AG04450 (cell line): ENCODE measurements at regions of chr2 and their contacts with region 1.

Region 1: DNA sequence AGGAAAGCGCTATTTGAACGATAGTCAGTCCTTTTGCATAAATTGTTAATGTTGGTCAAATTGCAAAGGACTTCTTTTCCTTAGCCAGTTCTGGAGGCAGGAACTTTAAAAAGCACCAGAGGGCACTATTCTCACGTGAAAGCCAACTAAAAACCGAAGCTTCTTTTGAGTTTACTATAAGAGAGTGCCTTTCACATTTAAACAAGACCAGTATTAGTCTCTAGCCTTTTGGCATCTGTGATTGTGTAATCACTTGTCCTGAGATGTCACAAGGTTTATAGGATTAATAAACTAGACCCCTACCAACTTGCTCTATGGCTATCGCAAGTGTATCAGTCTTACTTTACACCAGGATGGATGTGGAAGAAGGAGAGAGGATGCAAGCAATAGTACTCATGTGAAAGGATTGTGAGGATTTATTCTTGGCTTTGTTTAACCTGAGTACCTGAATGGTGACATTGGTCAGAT is 14.4 kb upstream of the STAT4 start:
- DNase-seq: no peak
- H3K4me3 ChIP-seq: no peak overlapping the region
- H3K27ac ChIP-seq: no peak overlapping the region
- H3K27me3 ChIP-seq: no peaks in the 10 kb centered on the region
- CTCF ChIP-seq: peak; percentile 81

Region 2: GRCh38 chr2:191145769-191146471 is 19.3 kb before region 1 on chr2:
- CTCF ChIA-PET with region 1: no interaction called
- POLR2A ChIA-PET with region 1: no interaction called
- DNase-seq: no peak
- H3K4me3 ChIP-seq: no peak overlapping the region
- H3K27ac ChIP-seq: no peak overlapping the region
- H3K27me3 ChIP-seq: no peaks in the 10 kb centered on the region
- CTCF ChIP-seq: no peak

Region 3: DNA sequence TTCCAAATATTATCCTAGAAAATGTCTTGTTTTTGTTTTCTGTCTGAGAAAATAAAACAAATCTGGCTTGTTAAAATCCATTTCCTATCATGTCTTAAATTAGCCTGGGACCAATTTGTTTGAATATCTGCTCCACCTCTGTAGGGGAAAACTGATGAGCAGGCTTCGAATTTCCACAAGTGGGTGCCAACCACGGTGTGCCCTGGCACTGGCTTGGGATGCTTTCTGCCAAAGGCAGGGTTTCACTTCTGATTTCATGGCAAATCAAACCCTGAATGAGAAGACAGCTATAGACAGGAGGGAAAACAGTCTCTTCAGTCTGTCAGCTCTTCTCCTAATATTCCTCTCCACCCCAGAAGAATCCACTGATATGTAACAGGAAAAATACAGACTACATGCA is 19.2 kb after region 1 on chr2:
- CTCF ChIA-PET with region 1: no interaction called
- POLR2A ChIA-PET with region 1: no interaction called
- DNase-seq: no peak
- H3K4me3 ChIP-seq: no peak overlapping the region
- H3K27ac ChIP-seq: no peak overlapping the region
- H3K27me3 ChIP-seq: no peaks in the 10 kb centered on the region
- CTCF ChIP-seq: no peak

Region 4: GRCh38 chr2:191202881-191203397 is 37.7 kb after region 1 on chr2:
- CTCF ChIA-PET with region 1: no interaction called
- POLR2A ChIA-PET with region 1: interaction called, 13 read pairs
- DNase-seq: peak; percentile 34
- H3K4me3 ChIP-seq: no peak overlapping the region
- H3K27ac ChIP-seq: peak overlapping the region; percentile 87
- H3K27me3 ChIP-seq: no peaks in the 10 kb centered on the region
- CTCF ChIP-seq: no peak

Region 5: GRCh38 chr2:191515551-191515950 is 350.3 kb after region 1 on chr2:
- CTCF ChIA-PET with region 1: interaction called, 21 read pairs
- POLR2A ChIA-PET with region 1: no interaction called
- DNase-seq: no peak
- H3K4me3 ChIP-seq: no peak overlapping the region
- H3K27ac ChIP-seq: no peak overlapping the region
- H3K27me3 ChIP-seq: no peaks in the 10 kb centered on the region
- CTCF ChIP-seq: no peak